Sciatic nerve (tissue), 2 donors: ENCODE measurements at regions of chr11 and their contacts with region 1.

Region 1: DNA sequence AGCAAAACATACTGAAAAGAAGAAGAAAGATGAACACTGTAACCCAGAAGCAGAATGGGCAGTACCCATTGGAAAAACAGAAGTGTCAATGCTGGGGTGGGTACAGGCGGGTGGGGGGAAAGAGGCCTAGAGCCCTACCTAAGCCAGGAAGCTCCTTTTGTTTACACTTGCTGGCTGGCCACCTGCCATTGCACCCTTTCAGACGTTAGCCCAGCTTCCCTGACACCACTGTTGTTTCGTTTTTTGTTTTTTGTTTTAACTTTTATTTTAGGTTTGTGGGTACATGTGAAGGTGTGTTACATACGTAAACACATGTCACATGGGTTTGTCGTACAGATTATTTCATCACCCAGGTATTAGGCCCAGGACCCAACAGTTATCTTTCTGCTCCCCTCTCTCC is 55.4 kb downstream of the PLEKHA7 start:
- DNase-seq: no peak
- ATAC-seq: no peak

Region 2: GRCh38 chr11:16881074-16881709 is 77.6 kb before region 1 on chr11:
- intact Hi-C with region 1: no loop called
- DNase-seq: no peak
- ATAC-seq: peak; percentile 56

Region 3: GRCh38 chr11:17014838-17015626 is 56.2 kb after region 1 on chr11:
- intact Hi-C with region 1: loop called (anchors 5 kb)
- DNase-seq: no peak
- ATAC-seq: no peak

Region 4: DNA sequence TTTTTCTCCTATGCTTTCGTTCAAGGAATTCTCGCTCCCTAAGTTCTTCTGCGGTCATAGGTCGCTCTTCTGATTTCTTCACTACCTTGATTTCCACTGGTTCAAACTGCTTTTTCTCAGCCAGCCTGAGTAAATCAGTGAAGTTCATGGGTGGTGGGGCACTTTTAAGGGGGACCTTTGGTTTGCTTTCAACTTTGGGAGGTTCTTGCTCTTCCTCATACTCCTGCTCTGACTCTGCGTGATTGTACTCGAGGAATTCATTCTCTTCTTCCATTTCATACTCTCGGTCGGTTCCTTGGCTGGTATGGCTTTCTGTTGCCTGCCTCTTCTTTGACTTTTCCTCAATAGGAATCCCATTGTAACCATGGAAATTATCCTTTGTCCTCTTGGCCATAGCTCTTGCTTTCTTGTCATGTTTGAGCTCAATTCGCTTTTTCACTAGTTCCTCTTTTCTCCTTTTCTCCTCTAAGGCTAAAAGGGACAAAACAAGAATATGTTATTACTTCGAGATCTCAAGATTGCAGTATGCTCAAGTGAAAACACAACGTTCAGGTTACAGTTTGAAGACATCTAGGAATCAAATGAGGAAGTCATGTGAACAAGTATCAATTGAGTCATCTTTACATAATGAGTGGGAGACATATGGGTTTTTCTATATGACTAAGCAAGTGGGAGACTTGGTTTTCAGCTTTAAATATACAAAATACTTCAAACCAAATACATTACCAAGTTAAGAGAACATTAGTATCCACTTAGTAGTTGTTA is 1657.0 kb after region 1 on chr11:
- intact Hi-C with region 1: no loop called
- DNase-seq: no peak
- ATAC-seq: no peak